Pancreas (tissue), 10 donors: ENCODE measurements at regions of chr18 and their contacts with region 1.

Region 1: GRCh38 chr18:73038336-73038735 is 170.5 kb upstream of the NETO1 start:
- DNase-seq: no peak
- ATAC-seq: no peak
- H3K4me3 ChIP-seq: no peak overlapping the region
- H3K27ac ChIP-seq: no peak overlapping the region
- H3K4me1 ChIP-seq: no peaks in the 10 kb centered on the region
- H3K27me3 ChIP-seq: no peaks in the 10 kb centered on the region
- CTCF ChIP-seq: no peak

Region 2: GRCh38 chr18:72727038-72727655 is 311.2 kb before region 1 on chr18:
- intact Hi-C with region 1: no loop called
- DNase-seq: no peak
- ATAC-seq: no peak
- H3K4me3 ChIP-seq: no peak overlapping the region
- H3K27ac ChIP-seq: no peak overlapping the region
- H3K4me1 ChIP-seq: no peaks in the 10 kb centered on the region
- H3K27me3 ChIP-seq: no peaks in the 10 kb centered on the region
- CTCF ChIP-seq: no peak

Region 3: GRCh38 chr18:72895548-72895947 is 142.8 kb before region 1 on chr18:
- intact Hi-C with region 1: no loop called
- DNase-seq: no peak
- ATAC-seq: no peak
- H3K4me3 ChIP-seq: no peak overlapping the region
- H3K27ac ChIP-seq: no peak overlapping the region
- H3K4me1 ChIP-seq: no peaks in the 10 kb centered on the region
- H3K27me3 ChIP-seq: no peaks in the 10 kb centered on the region
- CTCF ChIP-seq: no peak

Region 4: DNA sequence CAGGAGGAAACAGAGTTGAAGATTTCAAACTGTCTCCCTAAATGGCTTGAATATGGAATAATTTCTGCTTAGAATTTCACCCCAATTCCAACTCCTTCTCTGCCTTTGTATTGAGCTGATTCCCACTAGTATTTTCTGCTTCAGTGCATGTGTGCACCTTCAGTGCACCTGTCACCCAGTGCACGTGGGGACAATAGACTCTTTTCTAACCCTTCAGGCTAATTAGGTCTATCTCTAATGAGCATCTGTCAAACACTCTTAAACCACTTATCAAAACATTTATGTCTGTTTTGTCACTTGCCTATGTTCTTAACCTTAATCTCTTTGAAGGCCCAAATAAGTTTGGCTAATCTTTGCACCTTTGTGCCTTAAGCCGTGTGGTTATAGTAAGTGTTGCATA is 61.4 kb after region 1 on chr18:
- intact Hi-C with region 1: loop called in 1 of 3 experiments (anchors 10 kb)
- DNase-seq: no peak
- ATAC-seq: no peak
- H3K4me3 ChIP-seq: no peak overlapping the region
- H3K27ac ChIP-seq: no peak overlapping the region
- H3K4me1 ChIP-seq: no peaks in the 10 kb centered on the region
- H3K27me3 ChIP-seq: no peaks in the 10 kb centered on the region
- CTCF ChIP-seq: no peak

Region 5: DNA sequence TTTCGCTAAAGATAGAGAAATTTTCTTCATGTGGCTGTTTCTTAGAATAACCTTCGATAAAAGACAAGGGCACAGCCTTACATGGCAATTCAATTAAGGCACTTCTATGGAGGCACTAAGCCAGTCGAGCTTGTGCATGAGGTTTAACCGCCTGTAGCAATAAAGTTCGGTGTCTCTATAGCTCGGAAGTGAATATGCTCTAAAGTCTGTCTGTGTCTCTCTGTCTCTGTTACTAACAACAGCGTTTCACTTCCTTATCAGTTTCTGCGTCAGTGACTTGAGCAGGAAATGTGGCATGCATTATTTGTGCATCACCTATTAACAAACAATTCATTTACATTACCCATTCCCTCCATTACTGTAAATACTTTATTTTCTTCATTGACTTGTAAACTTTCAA is 194.6 kb after region 1 on chr18:
- intact Hi-C with region 1: no loop called
- DNase-seq: no peak
- ATAC-seq: no peak
- H3K4me3 ChIP-seq: no peak overlapping the region
- H3K27ac ChIP-seq: no peak overlapping the region
- H3K4me1 ChIP-seq: no peaks in the 10 kb centered on the region
- H3K27me3 ChIP-seq: no peaks in the 10 kb centered on the region
- CTCF ChIP-seq: no peak